Calu3 (cell line): ENCODE measurements at regions of chr6 and their contacts with region 1.

Region 1: GRCh38 chr6:124512431-124512830 is 449.8 kb upstream of the RNF217 start:
- DNase-seq: no peak
- H3K4me3 Mint-ChIP-seq: no peak overlapping the region
- H3K27ac Mint-ChIP-seq: no peak overlapping the region
- H3K4me1 Mint-ChIP-seq: no peaks in the 10 kb centered on the region
- H3K27me3 Mint-ChIP-seq: no peaks in the 10 kb centered on the region
- CTCF ChIP-seq: no peak

Region 2: DNA sequence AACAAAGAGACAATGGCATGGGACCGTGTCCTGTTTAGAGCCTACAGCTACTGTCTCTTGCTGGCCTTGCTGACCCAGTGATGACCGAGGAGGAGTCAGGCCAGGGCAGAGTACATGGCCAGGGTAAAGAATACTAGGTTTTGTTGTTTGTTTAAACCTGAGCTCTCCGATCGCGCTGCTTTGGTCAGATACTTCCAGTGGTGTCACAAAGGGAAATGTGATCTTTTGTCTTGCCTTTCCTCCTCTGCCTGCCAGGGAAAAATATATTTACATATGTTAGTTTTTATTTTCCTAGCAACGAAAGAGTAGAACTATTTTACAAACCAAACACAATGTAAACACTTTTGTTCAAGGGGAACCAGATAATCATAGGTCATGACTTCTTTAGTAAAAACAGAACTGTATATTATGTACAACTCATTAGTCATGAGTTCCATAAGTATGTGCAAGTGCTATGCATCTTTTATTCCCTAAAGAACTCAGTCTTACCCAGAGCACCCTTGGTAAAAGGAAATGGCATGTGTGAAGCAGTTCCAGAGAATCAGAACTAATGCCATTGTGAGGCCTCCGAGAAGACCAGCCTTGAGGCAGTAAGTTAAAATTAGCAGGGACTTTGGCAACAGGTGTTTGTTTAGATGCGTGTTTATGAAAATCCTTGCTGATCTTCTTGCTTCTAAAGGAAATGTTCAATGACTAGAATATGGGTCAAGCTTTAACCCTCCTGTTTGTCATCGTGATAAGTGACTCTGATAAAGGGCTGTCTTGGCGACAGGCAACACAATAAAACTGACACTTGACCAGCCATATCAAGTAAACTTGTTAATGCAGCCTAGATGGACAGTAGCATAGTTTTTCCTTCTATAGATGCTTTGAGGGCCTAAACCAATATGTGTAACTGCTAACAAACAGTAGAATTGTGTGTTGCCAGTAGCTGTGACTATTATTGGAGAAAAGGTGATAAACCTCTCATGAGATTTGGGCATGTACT is 504.1 kb before region 1 on chr6:
- CTCF ChIA-PET with region 1: interaction called, 13 read pairs
- intact Hi-C with region 1: no loop called
- DNase-seq: no peak
- H3K4me3 Mint-ChIP-seq: no peak overlapping the region
- H3K27ac Mint-ChIP-seq: no peak overlapping the region
- H3K4me1 Mint-ChIP-seq: no peaks in the 10 kb centered on the region
- H3K27me3 Mint-ChIP-seq: no peaks in the 10 kb centered on the region
- CTCF ChIP-seq: no peak

Region 3: DNA sequence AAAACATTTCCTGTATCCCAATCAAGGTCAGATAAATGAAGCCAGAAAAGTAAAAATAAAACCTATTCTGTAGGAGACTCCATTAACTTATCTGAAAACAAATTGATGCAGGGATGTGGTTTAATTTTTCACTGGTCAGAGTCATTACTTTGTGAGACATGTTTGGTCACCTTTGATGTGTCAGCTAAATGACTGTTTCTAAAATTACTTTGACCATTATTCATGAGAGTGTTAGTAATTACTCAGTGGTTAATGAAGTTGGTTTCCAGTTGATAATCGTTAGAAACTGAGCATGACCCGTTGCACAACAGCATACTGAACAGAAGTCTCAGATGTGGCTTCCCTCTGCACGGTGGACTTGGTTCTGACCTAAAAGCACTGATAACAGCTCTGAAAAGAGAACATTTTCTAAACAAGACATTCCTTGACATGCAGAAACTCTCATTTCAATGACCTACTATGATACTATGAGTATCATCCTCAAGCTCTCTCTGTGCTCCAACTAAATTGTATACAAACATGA is 39.3 kb after region 1 on chr6:
- CTCF ChIA-PET with region 1: no interaction called
- intact Hi-C with region 1: no loop called
- DNase-seq: no peak
- H3K4me3 Mint-ChIP-seq: no peak overlapping the region
- H3K27ac Mint-ChIP-seq: no peak overlapping the region
- H3K4me1 Mint-ChIP-seq: no peaks in the 10 kb centered on the region
- H3K27me3 Mint-ChIP-seq: no peaks in the 10 kb centered on the region
- CTCF ChIP-seq: no peak

Region 4: GRCh38 chr6:124590001-124590765 is 77.8 kb after region 1 on chr6:
- CTCF ChIA-PET with region 1: no interaction called
- intact Hi-C with region 1: no loop called
- DNase-seq: no peak
- H3K4me3 Mint-ChIP-seq: no peak overlapping the region
- H3K27ac Mint-ChIP-seq: no peak overlapping the region
- H3K4me1 Mint-ChIP-seq: no peaks in the 10 kb centered on the region
- H3K27me3 Mint-ChIP-seq: peaks cover 14% of the 10 kb centered on the region
- CTCF ChIP-seq: no peak

Region 5: DNA sequence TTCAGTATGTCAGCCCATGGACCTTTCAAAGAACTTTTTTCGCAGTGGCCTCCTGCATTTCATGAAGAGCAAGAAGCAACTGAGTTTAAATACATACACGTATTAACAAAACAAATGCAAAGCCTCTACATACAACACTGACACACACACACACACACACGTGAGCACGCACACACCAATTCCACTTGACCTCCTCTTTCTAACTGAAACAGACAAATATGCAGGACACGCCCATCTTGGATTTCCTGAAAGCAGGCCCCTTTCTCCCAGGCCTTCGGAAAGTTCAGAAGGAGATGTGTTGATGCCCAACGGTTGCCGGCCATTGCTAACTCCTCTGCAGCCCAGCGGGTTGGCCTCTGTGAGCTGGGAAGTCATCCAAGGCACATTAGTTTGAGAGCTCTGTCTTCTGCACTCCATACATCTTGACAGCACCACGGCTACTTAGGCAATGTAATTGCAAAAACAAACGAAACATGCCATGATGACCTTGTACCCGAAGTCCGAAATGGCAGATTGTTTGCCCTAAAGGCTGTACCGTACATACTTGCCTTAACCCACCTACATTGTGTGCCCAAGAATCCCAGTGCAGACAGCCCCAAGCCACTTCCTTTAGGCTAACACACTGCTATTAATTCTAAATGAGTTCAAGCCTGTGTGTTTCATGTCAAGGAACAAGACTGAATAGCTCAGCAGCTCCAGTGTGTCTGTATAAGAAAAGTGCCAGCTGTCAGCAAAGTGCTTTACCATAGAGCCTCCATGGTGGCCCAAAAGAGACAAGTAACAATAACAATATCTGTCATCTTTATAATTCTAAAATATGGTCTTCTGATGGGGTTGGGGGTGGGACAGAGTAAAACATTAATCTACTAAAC is 311.0 kb after region 1 on chr6:
- CTCF ChIA-PET with region 1: no interaction called
- intact Hi-C with region 1: no loop called
- DNase-seq: no peak
- H3K4me3 Mint-ChIP-seq: no peak overlapping the region
- H3K27ac Mint-ChIP-seq: no peak overlapping the region
- H3K4me1 Mint-ChIP-seq: peaks cover 7% of the 10 kb centered on the region
- H3K27me3 Mint-ChIP-seq: no peaks in the 10 kb centered on the region
- CTCF ChIP-seq: no peak

Region 6: GRCh38 chr6:125099211-125100073 is 587.0 kb after region 1 on chr6:
- CTCF ChIA-PET with region 1: no interaction called
- intact Hi-C with region 1: no loop called
- DNase-seq: peak; percentile 56
- H3K4me3 Mint-ChIP-seq: peak overlapping the region; percentile 75
- H3K27ac Mint-ChIP-seq: no peak overlapping the region
- H3K4me1 Mint-ChIP-seq: peaks cover 29% of the 10 kb centered on the region
- H3K27me3 Mint-ChIP-seq: no peaks in the 10 kb centered on the region
- CTCF ChIP-seq: no peak